ENCODE measurements at regions of chr12 and their contacts with region 1.

Region 1: DNA sequence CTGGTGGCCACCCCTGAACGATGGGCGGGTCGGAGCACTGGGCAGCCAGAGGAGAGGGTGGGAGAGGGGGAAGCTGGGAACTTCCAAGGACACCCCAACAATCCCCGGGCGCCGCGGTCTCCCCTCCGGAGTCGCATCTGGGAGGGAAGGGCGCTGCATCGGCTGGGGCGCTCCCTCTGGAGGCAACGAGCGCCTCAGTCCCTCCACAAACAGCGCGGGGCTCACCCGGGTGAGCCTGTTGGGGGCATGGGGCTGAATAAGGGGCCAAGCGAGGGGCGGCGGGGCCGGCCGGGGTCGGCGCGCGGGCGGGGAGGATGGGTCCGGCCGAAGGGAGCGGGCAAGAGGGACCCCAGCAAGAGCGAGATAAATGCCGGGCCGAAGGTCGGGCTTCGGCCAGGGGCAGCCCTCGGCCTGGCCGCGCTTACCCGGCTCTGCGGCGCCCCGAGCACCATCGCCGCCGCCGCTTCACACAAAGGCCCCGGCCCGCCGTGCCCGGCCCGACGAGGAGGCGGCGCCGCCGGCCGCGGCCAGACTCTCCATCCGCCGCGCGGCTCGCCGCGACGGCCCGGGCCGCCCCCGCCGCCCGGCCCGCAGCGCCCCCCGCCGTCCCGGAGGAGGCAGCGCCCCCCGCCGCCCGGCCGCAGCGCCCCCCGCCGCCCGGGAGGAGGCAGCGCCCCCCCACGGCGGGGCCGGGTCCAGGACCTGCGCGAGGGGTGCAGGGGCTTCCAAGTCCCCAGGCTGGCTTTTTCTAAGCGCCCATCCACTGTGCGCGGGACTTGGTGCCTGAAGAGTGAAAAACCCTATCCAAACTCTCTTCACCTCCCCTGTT is at the start of gene ZBTB39:
- DNase-seq: peak; percentile 64 to 79 (median 73)
- H3K4me3 ChIP-seq: peak within 1 kb of the TSS; percentile 70 to 89 (median 81)
- H3K27ac ChIP-seq: peak within 1 kb of the TSS; percentile 55 to 77
- H3K4me1 ChIP-seq: peaks cover 9 to 30% (median 23%) of the 10 kb centered on the region in 4 experiments
- H3K27me3 ChIP-seq: no peaks in the 10 kb centered on the region

Region 2: GRCh38 chr12:56763753-56764657 is 242.2 kb before region 1 on chr12:
- CTCF ChIA-PET with region 1: interaction called, 74 read pairs
- POLR2A ChIA-PET with region 1: no interaction called
- DNase-seq: no peak
- H3K4me3 ChIP-seq: no peak overlapping the region
- H3K27ac ChIP-seq: no peak overlapping the region
- H3K4me1 ChIP-seq: peaks cover 0 to 3% (median 0%) of the 10 kb centered on the region in 4 experiments
- H3K27me3 ChIP-seq: no peaks in the 10 kb centered on the region

Region 3: DNA sequence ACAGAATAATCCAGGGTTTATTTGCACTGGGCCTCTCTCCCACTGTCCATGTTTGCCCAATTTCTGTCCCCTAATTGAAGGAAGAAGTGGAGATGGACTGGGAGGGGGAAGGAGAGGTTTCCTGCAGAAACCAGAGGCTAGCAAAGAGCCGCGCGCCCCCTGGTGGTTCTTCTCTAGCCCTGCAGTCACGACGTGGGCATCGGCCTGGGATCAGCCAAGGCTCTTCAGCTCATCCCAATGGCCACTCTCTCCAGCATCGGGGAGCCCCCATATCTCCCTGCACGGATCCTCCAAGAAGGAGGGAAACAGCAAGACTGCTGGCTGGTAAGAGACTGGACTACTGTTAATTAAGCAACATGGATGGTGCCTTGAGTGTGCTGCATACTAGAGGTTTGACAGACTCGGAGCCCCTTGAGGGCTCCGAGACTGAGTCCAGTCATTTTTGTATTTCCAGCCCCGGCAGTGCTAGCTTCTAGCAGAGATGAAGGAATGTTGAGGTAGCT is 18.6 kb before region 1 on chr12:
- CTCF ChIA-PET with region 1: interaction called, 63 read pairs
- POLR2A ChIA-PET with region 1: interaction called, 5 read pairs
- DNase-seq: peak; percentile 61 to 69 (median 68)
- H3K4me3 ChIP-seq: peak overlapping the region in 3 of 7 experiments; percentile 14 to 54 (median 20)
- H3K27ac ChIP-seq: no peak overlapping the region
- H3K4me1 ChIP-seq: peaks cover 5 to 55% (median 40%) of the 10 kb centered on the region in 4 experiments
- H3K27me3 ChIP-seq: no peaks in the 10 kb centered on the region

Region 4: GRCh38 chr12:57031138-57031725 is 25.0 kb after region 1 on chr12:
- CTCF ChIA-PET with region 1: interaction called, 15 read pairs
- POLR2A ChIA-PET with region 1: no interaction called
- DNase-seq: peak; percentile 38 to 77 (median 68)
- H3K4me3 ChIP-seq: peak overlapping the region in 1 of 7 experiments; percentile 25
- H3K27ac ChIP-seq: peak overlapping the region in 1 of 2 experiments; percentile 6
- H3K4me1 ChIP-seq: peaks cover 8 to 29% (median 28%) of the 10 kb centered on the region in 4 experiments
- H3K27me3 ChIP-seq: no peaks in the 10 kb centered on the region

Region 5: DNA sequence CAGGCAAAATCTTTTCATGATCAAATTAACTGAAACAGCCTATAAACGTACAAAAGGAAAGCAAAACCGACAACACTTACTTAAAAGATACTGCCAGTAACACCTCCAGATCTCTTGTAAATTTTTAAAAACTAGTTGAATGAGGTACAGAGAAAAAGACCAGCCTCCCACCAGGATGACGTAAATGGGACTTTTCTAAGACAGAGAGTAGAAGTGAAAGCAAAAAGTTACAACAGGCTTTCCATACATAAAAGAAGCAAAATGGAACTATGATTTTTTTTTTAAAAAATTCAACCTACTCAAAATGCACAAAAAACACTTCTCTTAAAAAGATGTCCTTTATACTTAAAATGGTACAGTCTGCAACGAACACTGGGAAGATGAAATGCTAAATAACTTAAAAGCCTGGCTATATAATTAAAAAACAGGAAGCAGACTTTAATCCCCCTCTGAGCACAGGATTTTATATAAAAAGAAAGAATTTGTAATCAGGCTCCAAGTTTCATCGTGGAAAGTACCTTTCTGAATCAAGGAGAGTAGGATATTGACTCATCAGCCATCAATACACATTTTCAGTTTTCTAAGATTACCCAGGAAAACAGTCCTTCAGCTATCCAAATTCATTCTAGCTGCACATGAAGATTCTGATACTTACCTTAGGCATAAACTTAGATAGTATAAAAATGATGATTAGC is 57.9 kb after region 1 on chr12:
- CTCF ChIA-PET with region 1: interaction called, 121 read pairs
- POLR2A ChIA-PET with region 1: interaction called, 3 read pairs
- DNase-seq: peak in 2 of 3 donors; percentile 56 to 74
- H3K4me3 ChIP-seq: peak overlapping the region in 1 of 7 experiments; percentile 34
- H3K27ac ChIP-seq: peak overlapping the region; percentile 27 to 29
- H3K4me1 ChIP-seq: peaks cover 0 to 9% (median 0%) of the 10 kb centered on the region in 4 experiments
- H3K27me3 ChIP-seq: no peaks in the 10 kb centered on the region